HEK293 (cell line): ENCODE measurements at regions of chr12 and their contacts with region 1.

Region 1: DNA sequence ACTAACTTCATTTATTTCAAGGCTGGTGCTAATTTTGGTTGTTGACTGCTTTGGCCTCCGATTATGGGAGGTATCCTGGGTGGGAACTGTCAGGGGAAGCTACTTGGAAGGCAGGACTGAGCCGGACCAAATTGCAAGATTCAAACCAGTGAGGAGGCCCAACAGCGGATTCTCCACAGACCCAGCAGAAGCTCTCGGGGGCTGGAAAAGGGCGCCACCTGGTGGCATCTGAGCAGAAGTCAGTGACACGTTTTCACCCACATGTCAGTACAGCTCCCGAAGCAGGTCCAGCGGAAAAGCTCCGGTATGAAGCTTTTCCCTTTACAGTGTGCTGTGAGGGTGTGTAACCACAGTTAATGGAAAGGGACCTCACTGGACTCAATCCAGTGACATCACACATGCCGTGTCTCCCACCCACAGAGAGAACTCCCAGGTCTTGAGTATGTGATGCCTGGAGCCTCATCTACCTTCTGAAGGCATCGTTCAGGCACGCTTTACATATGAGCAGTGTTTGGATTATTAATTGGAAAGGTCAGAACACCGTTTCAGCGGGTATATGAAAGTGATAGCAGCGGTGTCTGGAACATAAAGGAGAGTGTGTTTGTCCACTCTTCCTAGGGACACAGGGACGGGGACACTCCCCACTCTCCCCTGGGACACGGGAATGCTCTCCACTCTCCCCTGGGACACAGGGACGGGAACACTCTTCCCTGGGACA is 3.6 kb upstream of the P2RX2 start:
- H3K4me3 ChIP-seq: no peak overlapping the region
- H3K27ac ChIP-seq: no peak overlapping the region
- H3K4me1 ChIP-seq: no peaks in the 10 kb centered on the region
- CTCF ChIP-seq: peak; percentile 76

Region 2: DNA sequence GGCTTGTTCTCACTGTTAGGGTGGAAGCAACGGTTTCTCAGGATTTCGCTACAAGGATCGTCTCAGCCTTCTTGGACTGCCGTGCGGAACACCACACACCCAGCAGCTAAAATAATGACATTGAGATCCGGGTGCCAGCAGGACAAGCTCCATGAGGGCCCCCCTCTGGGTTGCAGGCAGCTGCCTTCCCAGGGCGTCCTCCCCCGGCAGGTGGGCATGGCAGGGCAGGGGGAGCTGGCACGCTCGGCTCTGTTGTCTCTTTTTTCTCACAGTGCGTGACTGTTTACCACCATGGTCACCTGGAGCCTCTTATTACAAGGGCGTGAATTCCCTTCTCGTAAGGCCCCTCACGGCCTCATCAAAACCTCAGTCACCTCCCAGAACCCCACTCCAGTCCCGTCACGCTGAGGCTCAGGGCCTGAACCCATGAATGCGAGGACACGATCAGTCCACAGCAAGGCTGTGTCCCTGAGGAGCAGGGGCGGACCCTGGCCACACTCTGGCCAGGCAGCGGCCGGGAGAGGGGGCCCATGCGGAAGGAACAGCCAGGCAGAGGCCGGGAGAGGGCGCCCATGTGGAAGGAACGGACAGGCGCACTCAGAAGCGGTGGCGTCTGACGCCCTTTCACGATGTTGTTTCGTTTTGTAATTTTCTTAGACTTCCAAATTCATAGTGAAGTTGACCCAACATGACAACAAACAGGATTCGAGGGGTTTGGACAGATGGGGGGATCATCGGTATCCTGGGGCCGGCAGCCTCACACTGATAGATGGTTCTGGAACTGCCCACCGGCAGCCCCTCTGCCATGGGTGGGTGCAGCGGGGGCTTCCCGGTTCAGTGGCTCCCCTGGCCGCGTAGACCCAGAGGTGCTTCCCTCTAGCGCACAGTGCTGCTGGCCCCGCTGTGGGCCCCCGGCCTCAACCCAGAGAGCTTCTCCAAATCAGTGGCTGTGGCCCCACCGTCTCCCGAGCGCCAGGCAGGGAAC is 14.7 kb before region 1 on chr12:
- CTCF ChIA-PET with region 1: interaction called, 32 read pairs
- POLR2A ChIA-PET with region 1: no interaction called
- H3K4me3 ChIP-seq: no peak overlapping the region
- H3K27ac ChIP-seq: no peak overlapping the region
- H3K4me1 ChIP-seq: 0 out of 2 replicates have a peak, but pooled peaks cover 3% of the 10 kb centered on the region
- CTCF ChIP-seq: peak; percentile 74

Region 3: GRCh38 chr12:132672017-132672515 is 57.0 kb after region 1 on chr12:
- CTCF ChIA-PET with region 1: no interaction called
- POLR2A ChIA-PET with region 1: no interaction called
- H3K4me3 ChIP-seq: no peak overlapping the region
- H3K27ac ChIP-seq: no peak overlapping the region
- H3K4me1 ChIP-seq: no peaks in the 10 kb centered on the region
- CTCF ChIP-seq: no peak

Region 4: DNA sequence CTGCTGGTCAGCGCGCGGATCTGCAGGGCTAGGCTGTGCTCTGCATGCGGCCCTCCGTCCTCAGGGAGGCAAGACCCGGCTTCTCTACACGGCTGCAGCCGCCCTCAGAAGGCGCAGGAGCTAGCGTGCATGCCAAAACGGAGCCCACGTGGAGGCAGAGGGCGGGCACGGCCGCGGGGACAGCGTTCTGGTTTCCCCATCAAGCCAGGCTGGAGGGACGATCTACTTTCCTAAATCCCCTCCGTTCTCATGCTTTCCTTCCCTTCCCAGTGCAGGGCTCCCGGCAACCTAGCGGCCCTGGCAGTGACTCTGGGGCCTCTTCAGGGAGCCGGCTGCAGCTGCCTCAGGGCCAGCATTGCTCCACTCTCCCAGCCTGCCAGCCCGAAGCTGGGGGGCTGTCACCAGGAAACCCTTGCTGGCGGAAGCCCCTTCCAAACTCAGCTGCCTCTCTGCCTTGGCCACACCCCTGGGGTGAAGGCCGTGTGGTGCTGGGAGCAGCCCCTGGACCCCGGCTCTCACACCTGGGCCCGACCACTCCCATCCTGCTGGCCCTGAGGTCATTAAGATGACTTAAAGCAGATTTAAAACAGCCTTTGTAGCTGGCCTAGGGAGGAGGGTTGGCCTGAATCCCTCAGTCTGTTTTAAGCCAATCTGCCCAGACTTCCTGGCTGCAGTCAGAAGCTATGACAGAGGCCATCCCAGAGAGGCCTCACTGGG is 222.8 kb after region 1 on chr12:
- CTCF ChIA-PET with region 1: no interaction called
- POLR2A ChIA-PET with region 1: no interaction called
- H3K4me3 ChIP-seq: no peak overlapping the region
- H3K27ac ChIP-seq: no peak overlapping the region
- H3K4me1 ChIP-seq: no peaks in the 10 kb centered on the region
- CTCF ChIP-seq: no peak